ENCODE measurements at regions of chr11 and their contacts with region 1.

Region 1: GRCh38 chr11:46529095-46529905 is 64.5 kb downstream of the AMBRA1 start:
- DNase-seq: peak; percentile 70
- H3K4me3 ChIP-seq: no peak overlapping the region
- H3K27ac ChIP-seq: no peak overlapping the region
- H3K4me1 ChIP-seq: peaks cover 0 to 37% (median 8%) of the 10 kb centered on the region in 4 donors
- H3K27me3 ChIP-seq: no peaks in the 10 kb centered on the region
- CTCF ChIP-seq: peak; percentile 90 to 95 (median 92)
- EP300 ChIP-seq: no peak
- POLR2A ChIP-seq: no peak

Region 2: DNA sequence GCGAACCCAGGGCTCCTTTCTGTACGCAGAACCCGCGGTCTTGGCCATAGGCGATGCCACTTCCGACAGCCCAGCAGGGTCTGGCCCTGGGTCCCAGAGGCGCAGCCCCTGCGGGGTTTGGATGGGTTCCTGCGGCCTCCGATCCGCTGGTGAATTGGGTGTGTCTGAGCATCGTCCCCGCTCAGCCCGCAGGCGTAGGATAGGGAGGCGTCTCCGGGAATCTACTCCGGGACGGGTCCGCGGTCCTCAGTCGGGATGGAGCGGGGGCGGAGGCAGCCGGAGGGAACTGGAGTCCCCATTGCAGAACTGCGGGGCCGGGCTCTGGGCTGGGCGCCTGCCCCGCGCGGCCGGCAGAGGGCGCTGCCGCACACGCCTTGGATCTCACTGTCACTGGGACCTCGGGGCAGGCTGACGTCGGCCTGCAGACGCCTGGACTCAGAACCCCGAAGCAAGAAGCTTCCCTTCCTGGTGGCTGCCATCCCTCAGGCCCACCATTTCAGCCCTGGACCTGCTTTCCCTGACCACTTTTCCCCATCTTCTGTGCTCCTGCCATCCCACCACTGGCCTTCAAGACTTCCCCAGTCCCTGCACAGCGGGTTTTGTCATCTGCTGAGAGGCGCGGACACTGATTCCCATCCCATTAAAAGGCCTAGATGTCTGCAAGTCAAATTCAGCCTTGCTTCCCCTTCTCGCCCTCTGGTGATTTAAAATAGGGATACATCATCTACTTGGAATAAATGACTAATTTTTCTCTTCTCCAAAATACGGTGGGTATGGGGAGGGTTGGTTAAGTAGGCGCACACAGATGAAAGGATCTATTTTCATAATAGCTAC is 290.1 kb before region 1 on chr11:
- in situ Hi-C with region 1: loop called in 1 of 4 experiments (anchors 25 kb)
- intact Hi-C with region 1: no loop called
- DNase-seq: peak; percentile 86
- H3K4me3 ChIP-seq: peak overlapping the region; percentile 7 to 55 (median 30)
- H3K27ac ChIP-seq: peak overlapping the region; percentile 64 to 86 (median 78)
- H3K4me1 ChIP-seq: peaks cover 17 to 43% (median 34%) of the 10 kb centered on the region in 4 donors
- H3K27me3 ChIP-seq: peaks cover 36% of the 10 kb centered on the region
- CTCF ChIP-seq: peak; percentile 96 to 100 (median 99)
- EP300 ChIP-seq: no peak
- POLR2A ChIP-seq: no peak

Region 3: GRCh38 chr11:46392421-46393230 is 136.7 kb before region 1 on chr11:
- in situ Hi-C with region 1: loop called in 3 of 4 experiments (anchors 10 to 25 kb)
- intact Hi-C with region 1: loop called (anchors 10 kb)
- DNase-seq: peak; percentile 85
- H3K4me3 ChIP-seq: peak overlapping the region in 3 of 4 donors; percentile 32 to 52 (median 45)
- H3K27ac ChIP-seq: no peak overlapping the region
- H3K4me1 ChIP-seq: peaks cover 6 to 40% (median 40%) of the 10 kb centered on the region in 4 donors
- H3K27me3 ChIP-seq: peaks cover 48% of the 10 kb centered on the region
- CTCF ChIP-seq: no peak
- EP300 ChIP-seq: no peak
- POLR2A ChIP-seq: no peak

Region 4: GRCh38 chr11:46410021-46410420 is 119.3 kb before region 1 on chr11:
- in situ Hi-C with region 1: loop called in 1 of 4 experiments (anchors 25 kb)
- intact Hi-C with region 1: no loop called
- DNase-seq: no peak
- H3K4me3 ChIP-seq: no peak overlapping the region
- H3K27ac ChIP-seq: no peak overlapping the region
- H3K4me1 ChIP-seq: no peaks in the 10 kb centered on the region
- H3K27me3 ChIP-seq: no peaks in the 10 kb centered on the region
- CTCF ChIP-seq: no peak
- EP300 ChIP-seq: no peak
- POLR2A ChIP-seq: no peak

Region 5: GRCh38 chr11:46435679-46436078 is 93.6 kb before region 1 on chr11:
- in situ Hi-C with region 1: no loop called
- intact Hi-C with region 1: no loop called
- DNase-seq: no peak
- H3K4me3 ChIP-seq: no peak overlapping the region
- H3K27ac ChIP-seq: no peak overlapping the region
- H3K4me1 ChIP-seq: no peaks in the 10 kb centered on the region
- H3K27me3 ChIP-seq: no peaks in the 10 kb centered on the region
- CTCF ChIP-seq: no peak
- EP300 ChIP-seq: no peak
- POLR2A ChIP-seq: no peak

Measured in transverse colon (tissue), 4 donors.